ENCODE measurements at regions of chr16 and their contacts with region 1.

Region 1: GRCh38 chr16:30429678-30430427 is at the start of gene DCTPP1:
- DNase-seq: peak; percentile 94 to 96
- ATAC-seq: peak; percentile 98 to 99 (median 98)
- H3K4me3 ChIP-seq: peak within 1 kb of the TSS; percentile 73
- H3K27ac ChIP-seq: peak within 1 kb of the TSS; percentile 66
- H3K4me1 ChIP-seq: peaks cover 18% of the 10 kb centered on the region
- H3K27me3 ChIP-seq: no peaks in the 10 kb centered on the region
- CTCF ChIP-seq: peak; percentile 77
- total RNA-seq, gene DCTPP1: 23.3 to 54.4 (median 33.9) TPM

Region 2: GRCh38 chr16:30407102-30407803 is 22.6 kb before region 1 on chr16 and contains the start of gene ZNF771:
- intact Hi-C with region 1: loop called in 1 of 2 experiments (anchors 1 kb)
- DNase-seq: peak; percentile 96 to 97
- ATAC-seq: peak; percentile 94 to 97 (median 94)
- H3K4me3 ChIP-seq: peak within 1 kb of the TSS; percentile 69
- H3K27ac ChIP-seq: peak within 1 kb of the TSS; percentile 83
- H3K4me1 ChIP-seq: peaks cover 21% of the 10 kb centered on the region
- H3K27me3 ChIP-seq: no peaks in the 10 kb centered on the region
- CTCF ChIP-seq: no peak
- total RNA-seq, gene ZNF771: 4.8 to 14.6 (median 9.1) TPM

Region 3: DNA sequence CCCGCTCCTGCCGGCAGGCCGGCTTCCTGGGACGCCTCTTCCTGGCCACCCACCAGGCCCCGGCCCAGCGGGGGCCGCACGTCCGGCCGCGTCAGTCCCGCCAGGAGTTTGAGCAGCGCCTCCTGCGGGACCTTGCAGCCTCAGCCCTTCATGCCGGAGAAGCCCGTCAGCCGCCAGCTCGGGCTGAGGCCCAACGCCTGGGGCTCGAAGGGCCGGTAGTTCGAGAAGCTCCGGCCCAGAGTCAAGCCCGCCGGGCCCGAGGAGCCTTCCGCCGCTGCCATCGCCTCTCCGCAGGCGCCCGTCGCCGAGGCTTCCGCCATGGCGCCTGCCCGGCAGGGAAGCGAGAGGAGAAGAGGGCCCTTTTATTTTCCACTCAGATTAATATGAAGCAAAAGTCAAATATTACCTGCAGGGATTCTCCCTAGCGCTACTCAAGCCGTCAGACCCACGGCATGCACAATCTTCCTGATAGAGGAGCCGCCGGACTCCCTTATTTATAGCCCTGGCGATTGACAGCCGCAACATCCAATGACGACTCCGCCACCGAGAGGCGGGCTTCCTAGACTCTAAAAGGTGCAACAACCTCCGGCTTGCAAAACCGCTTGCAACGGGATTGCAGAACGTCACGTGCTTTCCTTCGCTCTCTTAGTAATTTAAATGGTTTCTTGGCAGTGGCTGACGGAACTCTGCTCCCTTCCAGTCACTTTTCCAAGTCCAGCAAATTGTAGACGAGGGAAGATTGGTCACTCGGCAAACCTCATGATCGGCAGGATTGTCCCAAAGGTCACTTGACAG is 15.8 kb after region 1 on chr16 and contains the start of gene SEPHS2:
- intact Hi-C with region 1: loop called in 1 of 2 experiments (anchors 1 kb)
- DNase-seq: peak; percentile 98 to 99
- ATAC-seq: peak; percentile 94 to 96 (median 96)
- H3K4me3 ChIP-seq: peak within 1 kb of the TSS; percentile 97
- H3K27ac ChIP-seq: peak within 1 kb of the TSS; percentile 100
- H3K4me1 ChIP-seq: peaks cover 22% of the 10 kb centered on the region
- H3K27me3 ChIP-seq: no peaks in the 10 kb centered on the region
- CTCF ChIP-seq: peak; percentile 39
- total RNA-seq, gene SEPHS2: 25.4 to 61.4 (median 46.9) TPM

Region 4: GRCh38 chr16:30534368-30535105 is 104.7 kb after region 1 on chr16 and contains the start of gene ZNF747:
- intact Hi-C with region 1: loop called in 1 of 2 experiments (anchors 1 kb)
- DNase-seq: peak; percentile 95 to 97
- ATAC-seq: peak; percentile 91 to 94 (median 92)
- H3K4me3 ChIP-seq: peak within 1 kb of the TSS; percentile 94
- H3K27ac ChIP-seq: peak within 1 kb of the TSS; percentile 97
- H3K4me1 ChIP-seq: peaks cover 17% of the 10 kb centered on the region
- H3K27me3 ChIP-seq: no peaks in the 10 kb centered on the region
- CTCF ChIP-seq: peak; percentile 0
- total RNA-seq, gene ZNF747: 6.4 to 16.4 (median 8.9) TPM

Region 5: DNA sequence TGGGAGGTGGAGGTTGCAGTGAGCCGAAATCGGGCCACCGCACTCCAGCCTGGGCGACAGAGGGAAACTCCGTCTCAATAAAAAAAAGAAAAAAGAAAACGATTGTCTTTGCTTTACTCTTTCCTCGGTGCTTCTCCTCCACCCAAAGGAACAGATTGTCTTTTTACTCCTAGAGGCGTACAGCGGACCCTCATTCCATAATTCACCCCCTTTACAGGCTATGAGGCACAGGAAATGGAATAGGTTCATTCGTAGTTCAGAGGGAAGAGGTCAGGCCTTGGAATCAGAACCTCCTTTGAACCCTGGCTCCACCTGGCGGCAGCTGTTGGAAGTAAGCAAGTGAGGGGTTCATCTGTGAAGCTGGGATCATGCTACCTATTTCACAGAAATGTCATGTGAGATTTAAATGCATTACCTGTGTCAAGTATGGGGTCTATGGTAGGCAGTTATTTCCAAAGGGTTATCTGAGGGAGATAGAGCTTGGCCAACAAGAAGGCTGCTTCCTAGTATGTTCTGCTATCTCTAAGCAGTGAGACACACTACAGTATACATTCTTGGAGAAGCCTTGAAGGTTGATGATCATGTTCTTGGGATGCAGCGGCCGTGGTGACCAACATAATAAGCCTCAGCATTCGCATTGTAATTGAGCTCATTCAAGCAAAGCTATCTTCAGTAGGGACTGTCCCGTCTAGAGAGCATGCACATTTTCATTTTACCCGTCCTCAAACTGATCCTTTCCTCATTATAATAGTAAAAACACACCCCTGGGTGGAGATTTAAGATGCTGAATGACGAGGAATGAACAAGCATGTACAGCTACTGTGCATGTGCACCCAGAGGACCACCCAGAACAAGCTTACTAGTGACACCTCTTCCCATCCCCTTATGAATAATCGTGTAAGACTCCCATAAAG is 199.0 kb after region 1 on chr16:
- intact Hi-C with region 1: loop called in 1 of 2 experiments (anchors 2 kb)
- DNase-seq: peak; percentile 88 to 92
- ATAC-seq: peak; percentile 84 to 97 (median 90)
- H3K4me3 ChIP-seq: peak overlapping the region; percentile 54
- H3K27ac ChIP-seq: peak overlapping the region; percentile 67
- H3K4me1 ChIP-seq: no peaks in the 10 kb centered on the region
- H3K27me3 ChIP-seq: no peaks in the 10 kb centered on the region
- CTCF ChIP-seq: peak; percentile 92